Activated CD4-positive, alpha-beta T cell treated with anti-CD3 and anti-CD28 coated beads for 36 hours (primary cell): ENCODE measurements at regions of chr10 and their contacts with region 1.

Region 1: DNA sequence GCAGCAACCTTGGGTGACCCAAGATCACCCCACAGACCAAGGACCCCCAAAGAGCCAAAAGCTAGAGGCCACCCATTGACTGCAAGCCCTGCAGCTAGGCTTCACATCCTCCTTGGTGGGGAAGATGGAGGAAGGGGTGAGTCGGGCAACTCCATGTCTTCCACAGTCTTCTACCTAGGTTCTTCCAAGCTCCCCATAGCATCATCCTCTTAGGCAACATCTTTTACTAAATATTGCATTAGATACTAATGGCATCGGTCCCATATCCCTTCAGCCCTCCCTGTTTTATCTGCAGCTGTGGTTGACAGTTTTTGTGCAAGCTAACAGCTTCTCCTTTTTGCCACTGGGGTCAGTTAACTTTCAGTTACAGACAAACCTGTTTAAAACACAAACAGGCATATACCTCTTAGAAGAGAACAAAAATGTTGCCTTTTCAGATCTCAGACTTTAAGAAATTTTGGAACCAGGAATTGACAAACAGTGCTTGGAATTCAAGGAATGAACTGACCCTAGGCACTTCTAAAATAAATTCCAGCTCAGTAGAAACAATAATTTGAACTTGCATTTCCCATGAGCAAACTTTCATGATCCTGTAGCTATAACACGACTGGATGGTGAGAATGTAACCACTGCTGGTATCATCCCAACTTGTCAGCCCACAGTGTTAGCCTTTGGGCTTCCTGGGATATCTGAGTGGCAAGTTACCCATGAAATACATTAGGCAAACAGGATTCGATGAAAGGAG is 33.9 kb upstream of the MSMB start:
- DNase-seq: no peak
- ATAC-seq: no peak
- H3K4me3 Mint-ChIP-seq: no peak overlapping the region
- H3K27ac Mint-ChIP-seq: no peak overlapping the region
- H3K4me1 Mint-ChIP-seq: peaks cover 31% of the 10 kb centered on the region
- H3K27me3 Mint-ChIP-seq: no peaks in the 10 kb centered on the region

Region 2: GRCh38 chr10:46062723-46063428 is 17.1 kb before region 1 on chr10:
- CTCF ChIA-PET with region 1: no interaction called
- POLR2A ChIA-PET with region 1: no interaction called
- intact Hi-C with region 1: loop called in 1 of 2 experiments (anchors 2 kb)
- DNase-seq: no peak
- ATAC-seq: no peak
- H3K4me3 Mint-ChIP-seq: no peak overlapping the region
- H3K27ac Mint-ChIP-seq: no peak overlapping the region
- H3K4me1 Mint-ChIP-seq: no peaks in the 10 kb centered on the region
- H3K27me3 Mint-ChIP-seq: no peaks in the 10 kb centered on the region

Region 3: DNA sequence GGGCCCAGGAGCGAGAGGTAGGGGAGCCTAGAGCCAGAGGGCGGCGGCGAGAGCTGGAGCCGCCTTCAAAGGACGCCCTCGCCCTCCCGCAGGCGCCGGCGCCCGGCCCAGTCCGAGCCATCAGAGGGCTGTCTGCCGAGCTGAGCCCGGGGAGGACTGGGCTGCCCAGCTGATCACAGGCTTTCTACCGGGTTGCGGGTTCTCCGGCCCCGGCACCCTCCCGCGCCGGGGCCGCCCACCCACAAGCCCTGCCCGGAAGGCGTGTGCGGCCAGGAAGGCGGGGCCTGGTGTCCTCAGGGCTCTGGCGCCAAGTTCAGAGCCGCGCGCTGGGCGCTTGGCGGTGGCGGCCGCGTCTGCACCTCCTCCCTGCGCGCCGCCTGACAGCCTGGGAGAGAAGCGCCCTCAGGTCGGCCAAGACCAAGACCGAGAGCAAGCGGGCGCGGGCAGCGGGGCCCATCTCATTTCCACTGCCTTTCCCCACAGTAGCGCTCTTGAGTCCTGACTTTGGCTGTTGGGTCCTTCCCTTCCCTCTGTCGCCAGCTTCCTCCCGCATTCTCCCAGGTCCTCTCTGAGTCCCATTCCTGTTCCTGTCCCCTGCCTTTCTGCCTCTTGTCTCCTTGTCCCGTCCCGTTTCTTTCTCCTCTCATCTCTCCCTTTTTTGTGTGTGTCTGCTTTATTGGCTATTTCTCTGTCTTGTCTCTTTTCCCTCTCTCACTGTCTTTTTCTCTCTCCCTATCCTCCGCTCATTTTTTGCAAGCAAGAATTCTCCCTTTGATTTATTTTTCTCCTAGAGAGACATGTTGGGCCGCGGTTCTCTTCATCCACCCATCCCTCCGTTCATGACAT is 26.6 kb after region 1 on chr10:
- CTCF ChIA-PET with region 1: no interaction called
- POLR2A ChIA-PET with region 1: no interaction called
- intact Hi-C with region 1: no loop called
- DNase-seq: peak; percentile 79
- ATAC-seq: peak; percentile 97
- H3K4me3 Mint-ChIP-seq: peak overlapping the region; percentile 73
- H3K27ac Mint-ChIP-seq: peak overlapping the region; percentile 75
- H3K4me1 Mint-ChIP-seq: peaks cover 14% of the 10 kb centered on the region
- H3K27me3 Mint-ChIP-seq: peaks cover 6% of the 10 kb centered on the region